Ascending aorta (tissue), 2 donors: ENCODE measurements at regions of chr14 and their contacts with region 1.

Region 1: DNA sequence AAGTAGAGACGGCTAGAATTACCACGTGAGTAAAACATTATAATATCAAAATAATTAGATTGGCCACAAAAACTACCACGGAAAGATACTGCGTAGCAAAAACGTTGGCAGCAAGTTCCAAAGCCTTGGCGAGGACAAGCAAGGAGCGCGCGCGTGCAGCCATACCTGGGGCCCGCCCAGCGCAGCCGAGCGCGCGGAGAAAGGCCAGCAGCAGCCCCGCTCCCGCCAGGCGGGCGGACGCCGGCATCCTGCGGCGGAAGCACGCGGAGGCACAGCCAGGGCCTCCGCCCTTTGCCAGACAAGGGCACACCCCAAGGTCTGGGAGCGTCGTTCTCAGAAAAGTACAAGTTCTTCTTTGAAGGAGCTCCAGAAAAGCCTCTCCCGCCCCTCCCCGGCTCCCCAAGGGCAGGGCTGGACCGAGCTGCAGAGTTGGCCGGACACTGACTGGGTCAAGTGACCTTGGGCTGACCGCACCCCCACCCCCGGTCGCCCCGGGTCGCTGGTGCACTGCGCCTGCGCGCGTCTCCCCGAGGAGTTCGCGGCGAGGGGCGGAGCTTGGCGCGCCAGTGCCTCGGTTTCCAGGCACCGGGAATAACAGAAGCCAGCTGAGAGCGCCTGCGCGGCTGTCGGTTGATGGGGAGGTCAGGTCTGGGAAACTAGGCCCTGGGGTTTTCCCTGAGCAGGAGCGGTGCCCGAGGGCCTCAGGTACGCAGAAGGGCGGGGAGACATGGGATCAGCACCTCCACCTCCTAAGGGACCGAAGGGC is at the start of gene ZC2HC1C:
- DNase-seq: peak; percentile 81 to 97
- H3K4me3 ChIP-seq: peak within 1 kb of the TSS; percentile 59 to 84
- H3K27ac ChIP-seq: peak within 1 kb of the TSS; percentile 83 to 91
- H3K4me1 ChIP-seq: peaks cover 2 to 13% of the 10 kb centered on the region in 2 donors
- H3K27me3 ChIP-seq: no peaks in the 10 kb centered on the region
- CTCF ChIP-seq: no peak
- total RNA-seq, gene ZC2HC1C: not detected

Region 2: GRCh38 chr14:75002392-75003249 is 66.6 kb before region 1 on chr14 and contains the start of gene EIF2B2:
- intact Hi-C with region 1: loop called (anchors 2 kb)
- DNase-seq: peak; percentile 95 to 99
- H3K4me3 ChIP-seq: peak within 1 kb of the TSS; percentile 60 to 79
- H3K27ac ChIP-seq: peak within 1 kb of the TSS; percentile 67 to 84
- H3K4me1 ChIP-seq: peaks cover 5 to 20% of the 10 kb centered on the region in 2 donors
- H3K27me3 ChIP-seq: no peaks in the 10 kb centered on the region
- CTCF ChIP-seq: peak; percentile 11 to 38 (median 20)
- total RNA-seq, gene EIF2B2: 27.1 TPM

Region 3: GRCh38 chr14:75022655-75023054 is 46.6 kb before region 1 on chr14:
- intact Hi-C with region 1: no loop called
- DNase-seq: no peak
- H3K4me3 ChIP-seq: no peak overlapping the region
- H3K27ac ChIP-seq: no peak overlapping the region
- H3K4me1 ChIP-seq: no peaks in the 10 kb centered on the region
- H3K27me3 ChIP-seq: no peaks in the 10 kb centered on the region
- CTCF ChIP-seq: peak in 2 of 3 experiments; percentile 22 to 40

Region 4: DNA sequence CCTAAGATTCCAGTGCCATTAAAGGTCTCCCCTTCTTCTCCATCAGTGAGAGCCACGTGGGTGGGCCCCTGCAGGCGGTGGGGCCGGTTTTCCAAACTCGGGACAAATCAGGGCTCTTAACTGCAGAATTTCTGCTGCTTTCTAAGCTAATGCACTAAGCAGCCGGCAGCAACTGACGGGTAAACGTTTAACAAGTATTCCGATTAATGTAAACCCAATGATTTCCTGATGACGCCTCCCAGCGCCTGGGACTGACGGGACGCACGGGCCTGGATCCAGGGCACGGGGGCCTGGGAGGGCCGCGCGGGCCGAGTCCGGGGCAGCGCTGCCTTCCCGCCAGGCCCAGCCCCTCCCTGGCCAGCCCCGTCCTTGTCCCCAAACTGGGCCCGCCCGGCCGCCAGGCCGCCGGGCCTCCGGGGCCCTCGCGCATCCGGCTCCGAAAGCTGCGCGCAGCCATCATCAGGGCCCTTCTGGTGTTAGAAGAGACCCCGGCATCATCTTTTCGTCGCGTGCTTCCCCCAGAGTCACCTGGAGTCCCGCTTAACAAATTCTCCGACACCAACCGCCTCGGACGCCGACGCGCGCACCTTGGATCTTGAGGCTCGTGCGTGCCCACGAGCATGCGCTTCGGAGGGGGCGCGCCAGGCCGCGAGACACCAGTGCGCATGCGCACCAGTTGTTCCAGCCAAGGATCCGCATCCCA is 18.2 kb before region 1 on chr14 and contains the start of gene MLH3:
- intact Hi-C with region 1: loop called (anchors 1 kb)
- DNase-seq: peak; percentile 33 to 87
- H3K4me3 ChIP-seq: peak within 1 kb of the TSS; percentile 62 to 76
- H3K27ac ChIP-seq: peak within 1 kb of the TSS; percentile 90 to 91
- H3K4me1 ChIP-seq: peaks cover 3 to 22% of the 10 kb centered on the region in 2 donors
- H3K27me3 ChIP-seq: no peaks in the 10 kb centered on the region
- CTCF ChIP-seq: no peak
- total RNA-seq, gene MLH3: 23.9 TPM

Region 5: DNA sequence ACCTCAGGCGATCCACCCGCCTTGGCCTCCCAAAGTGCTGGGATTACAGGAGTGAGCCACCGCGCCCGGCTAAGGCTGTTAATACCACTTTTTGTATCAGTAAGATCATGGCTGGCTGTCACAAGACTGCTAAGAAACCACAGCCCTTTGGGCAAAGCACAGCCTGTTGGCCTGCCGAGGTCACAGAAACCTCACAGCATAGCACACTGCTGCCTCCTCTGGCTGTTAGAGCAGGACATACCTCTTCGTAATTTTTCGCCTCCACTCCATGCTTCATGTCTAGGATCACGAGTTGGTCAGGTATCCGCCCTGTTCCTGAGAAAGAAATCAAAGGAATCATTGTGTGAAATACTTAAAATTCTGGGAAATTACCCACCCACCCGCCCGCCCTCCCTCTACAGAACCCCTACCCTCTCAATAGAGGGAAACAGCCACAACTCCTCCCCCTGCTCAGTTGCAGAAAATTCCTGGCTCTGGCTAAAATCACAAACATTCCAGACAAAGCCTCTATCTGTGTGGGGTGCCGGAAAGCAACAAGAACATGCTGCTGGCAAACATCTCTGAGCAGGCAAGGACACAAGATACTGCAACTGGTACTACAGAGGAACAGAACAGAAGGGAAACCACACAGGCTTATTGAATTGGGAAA is 78.3 kb after region 1 on chr14:
- intact Hi-C with region 1: no loop called
- DNase-seq: peak; percentile 15 to 88
- H3K4me3 ChIP-seq: peak overlapping the region in 1 of 2 donors; percentile 2
- H3K27ac ChIP-seq: peak overlapping the region; percentile 74 to 85
- H3K4me1 ChIP-seq: peaks cover 4 to 27% of the 10 kb centered on the region in 2 donors
- H3K27me3 ChIP-seq: no peaks in the 10 kb centered on the region
- CTCF ChIP-seq: peak; percentile 11 to 50 (median 49)